ENCODE measurements at regions of chr10 and their contacts with region 1.

Region 1: DNA sequence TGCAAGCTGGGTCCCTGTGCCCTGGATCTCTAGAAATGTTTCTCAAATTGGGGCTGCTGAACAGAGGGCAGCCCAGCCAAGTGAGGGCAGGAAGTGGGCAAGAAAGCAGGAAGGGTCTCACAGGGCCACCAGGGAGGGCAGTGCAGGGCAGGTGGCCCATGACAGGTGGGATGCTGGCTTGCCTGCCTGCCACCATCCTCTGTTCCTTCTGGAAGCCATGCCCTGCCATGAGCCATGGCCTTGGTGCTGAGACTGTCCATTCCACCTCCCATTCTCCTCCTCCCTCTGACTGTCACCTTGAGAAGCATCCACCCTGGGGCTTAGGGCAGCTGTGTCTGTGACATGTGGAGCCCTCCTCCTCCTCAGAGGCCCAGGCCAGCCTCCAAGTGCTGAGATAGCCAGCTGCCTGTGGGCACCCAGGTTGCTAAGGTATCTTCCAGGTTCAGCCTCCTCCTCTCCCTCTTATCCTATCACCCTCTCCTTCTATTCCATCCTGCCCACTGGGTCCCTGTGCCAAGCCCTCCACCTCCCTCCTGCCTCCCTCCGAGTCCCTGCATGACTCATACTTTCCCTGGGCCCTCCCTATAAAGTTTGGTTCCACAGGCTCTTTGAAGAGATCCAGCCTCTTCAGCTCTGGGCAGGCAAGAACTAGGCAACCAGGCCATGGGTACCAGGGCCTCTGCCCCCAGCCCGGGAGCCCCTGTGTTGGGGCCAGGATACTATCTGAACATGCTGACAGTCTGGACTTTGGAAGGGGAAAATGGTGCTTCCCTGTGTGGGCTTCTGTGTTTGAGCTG is 1.3 kb downstream of the VSIR start:
- DNase-seq: peak in 1 of 5 donors; percentile 82
- H3K4me3 ChIP-seq: peak overlapping the region; percentile 84 to 95
- H3K4me3 Mint-ChIP-seq: peak overlapping the region; percentile 95 to 97 (median 95)
- H3K27ac ChIP-seq: peak overlapping the region; percentile 93
- H3K27ac Mint-ChIP-seq: peak overlapping the region; percentile 92 to 99 (median 95)
- H3K4me1 ChIP-seq: peaks cover 84% of the 10 kb centered on the region
- H3K4me1 Mint-ChIP-seq: peaks cover 55 to 91% (median 69%) of the 10 kb centered on the region in 4 donors
- H3K27me3 ChIP-seq: no peaks in the 10 kb centered on the region
- H3K27me3 Mint-ChIP-seq: no peaks in the 10 kb centered on the region

Region 2: DNA sequence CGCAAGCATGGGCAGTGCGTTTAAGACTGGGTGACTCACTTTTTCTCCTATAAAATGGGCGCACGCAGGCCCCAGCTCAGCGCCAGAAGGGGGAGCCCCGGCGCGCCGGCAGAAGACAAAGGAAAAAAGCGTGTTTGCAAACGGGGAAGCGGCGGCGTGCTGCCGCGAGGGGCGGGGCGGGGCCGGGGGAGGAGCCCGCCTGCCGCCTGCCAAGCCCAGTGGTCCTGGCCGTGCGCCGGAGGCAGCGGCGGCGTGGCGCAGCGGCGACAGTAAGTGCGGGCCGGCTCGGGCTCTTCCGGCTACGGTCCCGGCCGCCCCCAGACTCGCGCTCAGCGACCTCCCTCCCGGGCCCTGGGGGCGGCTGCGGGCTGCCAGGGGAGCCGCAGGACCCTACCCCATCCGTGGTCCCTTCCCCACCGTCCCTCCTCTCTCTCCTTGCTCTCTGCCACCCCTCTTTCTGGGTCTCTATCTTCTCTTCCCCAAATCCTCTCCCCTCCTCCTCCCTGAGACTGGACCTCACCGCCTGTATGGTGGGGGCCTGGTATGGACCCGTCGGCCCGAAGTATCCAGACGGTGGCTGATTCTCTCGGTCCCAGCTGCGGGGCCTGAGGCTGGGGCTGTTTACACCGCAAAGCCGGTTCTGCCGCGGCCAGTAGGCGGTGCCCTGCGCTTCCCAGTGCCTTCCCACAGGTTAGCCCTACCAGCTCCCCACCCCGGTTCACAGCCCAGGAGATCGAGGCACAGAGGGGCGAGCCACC is 452.8 kb before region 1 on chr10 and contains the start of gene SLC29A3:
- CTCF ChIA-PET with region 1: interaction called, 8 read pairs
- POLR2A ChIA-PET with region 1: interaction called, 8 read pairs
- intact Hi-C with region 1: loop called (anchors 1 kb)
- DNase-seq: peak; percentile 78 to 87 (median 80)
- H3K4me3 ChIP-seq: peak within 1 kb of the TSS; percentile 69 to 80
- H3K4me3 Mint-ChIP-seq: peak within 1 kb of the TSS; percentile 87 to 97 (median 92)
- H3K27ac ChIP-seq: peak within 1 kb of the TSS; percentile 54
- H3K27ac Mint-ChIP-seq: peak within 1 kb of the TSS; percentile 78 to 93 (median 89)
- H3K4me1 ChIP-seq: peaks cover 19% of the 10 kb centered on the region
- H3K4me1 Mint-ChIP-seq: peaks cover 16 to 51% (median 27%) of the 10 kb centered on the region in 4 donors
- H3K27me3 ChIP-seq: no peaks in the 10 kb centered on the region
- H3K27me3 Mint-ChIP-seq: no peaks in the 10 kb centered on the region
- total RNA-seq, gene SLC29A3: 7.0 to 9.1 TPM

Region 3: GRCh38 chr10:71486484-71487114 is 285.4 kb before region 1 on chr10:
- CTCF ChIA-PET with region 1: no interaction called
- POLR2A ChIA-PET with region 1: no interaction called
- intact Hi-C with region 1: no loop called
- DNase-seq: peak in 3 of 5 donors; percentile 7 to 44 (median 8)
- H3K4me3 ChIP-seq: no peak overlapping the region
- H3K4me3 Mint-ChIP-seq: no peak overlapping the region
- H3K27ac ChIP-seq: no peak overlapping the region
- H3K27ac Mint-ChIP-seq: no peak overlapping the region
- H3K4me1 ChIP-seq: no peaks in the 10 kb centered on the region
- H3K4me1 Mint-ChIP-seq: no peaks in the 10 kb centered on the region
- H3K27me3 ChIP-seq: no peaks in the 10 kb centered on the region
- H3K27me3 Mint-ChIP-seq: peaks cover 7 to 9% of the 10 kb centered on the region in 2 donors

Region 4: GRCh38 chr10:71696628-71697326 is 75.2 kb before region 1 on chr10:
- CTCF ChIA-PET with region 1: interaction called, 379 read pairs
- POLR2A ChIA-PET with region 1: interaction called, 83 read pairs
- intact Hi-C with region 1: loop called (anchors 1 kb)
- DNase-seq: peak; percentile 54 to 60 (median 56)
- H3K4me3 ChIP-seq: no peak overlapping the region
- H3K4me3 Mint-ChIP-seq: peak overlapping the region in 1 of 8 donors; percentile 10
- H3K27ac ChIP-seq: no peak overlapping the region
- H3K27ac Mint-ChIP-seq: peak overlapping the region in 3 of 7 donors; percentile 24 to 57 (median 46)
- H3K4me1 ChIP-seq: peaks cover 51% of the 10 kb centered on the region
- H3K4me1 Mint-ChIP-seq: peaks cover 23 to 60% (median 35%) of the 10 kb centered on the region in 4 donors
- H3K27me3 ChIP-seq: no peaks in the 10 kb centered on the region
- H3K27me3 Mint-ChIP-seq: no peaks in the 10 kb centered on the region

Region 5: DNA sequence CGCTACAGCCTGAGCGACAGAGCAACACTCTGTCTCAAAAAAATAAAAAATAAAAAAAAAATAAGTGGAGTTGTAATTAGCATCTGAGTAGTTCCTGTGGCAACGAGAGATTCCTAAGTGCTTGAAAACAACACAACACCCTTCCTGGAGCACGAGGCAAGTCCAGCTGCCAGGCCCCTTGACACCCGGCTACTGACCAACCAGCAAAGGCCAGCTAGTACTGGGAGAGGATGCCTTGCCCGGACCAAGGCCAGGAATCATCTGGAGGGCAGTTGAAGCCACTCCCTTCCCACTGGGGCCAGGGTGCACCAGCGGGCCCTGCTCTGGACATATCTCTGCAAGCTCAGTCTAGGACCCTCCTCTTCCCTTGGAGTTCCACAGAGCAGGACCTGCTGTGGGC is 53.0 kb before region 1 on chr10:
- CTCF ChIA-PET with region 1: interaction called, 174 read pairs
- POLR2A ChIA-PET with region 1: interaction called, 444 read pairs
- intact Hi-C with region 1: no loop called
- DNase-seq: no peak
- H3K4me3 ChIP-seq: no peak overlapping the region
- H3K4me3 Mint-ChIP-seq: no peak overlapping the region
- H3K27ac ChIP-seq: no peak overlapping the region
- H3K27ac Mint-ChIP-seq: peak overlapping the region in 2 of 7 donors; percentile 41 to 79
- H3K4me1 ChIP-seq: peaks cover 74% of the 10 kb centered on the region
- H3K4me1 Mint-ChIP-seq: peaks cover 27 to 79% (median 47%) of the 10 kb centered on the region in 4 donors
- H3K27me3 ChIP-seq: no peaks in the 10 kb centered on the region
- H3K27me3 Mint-ChIP-seq: no peaks in the 10 kb centered on the region

Region 6: DNA sequence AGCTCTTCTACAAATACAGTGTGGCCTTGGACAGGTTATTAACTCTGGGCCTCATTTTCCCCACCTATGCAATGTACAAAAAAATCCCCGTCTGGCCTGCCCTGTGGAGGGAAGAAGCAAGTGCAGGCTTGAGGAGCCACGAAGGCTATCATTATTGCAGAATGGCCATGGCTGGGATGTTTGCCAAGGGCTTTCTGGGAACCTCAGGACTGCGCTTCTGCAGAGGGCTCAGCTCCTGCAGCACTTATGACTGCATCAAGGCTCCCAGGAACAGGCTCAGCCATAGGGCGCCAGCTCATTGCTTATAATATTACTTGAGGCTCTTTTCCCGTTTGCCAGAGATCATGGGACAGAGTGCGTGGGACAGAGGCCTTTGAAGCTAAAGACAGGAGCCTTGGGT is 31.9 kb before region 1 on chr10:
- CTCF ChIA-PET with region 1: interaction called, 174 read pairs
- POLR2A ChIA-PET with region 1: interaction called, 1,035 read pairs
- intact Hi-C with region 1: no loop called
- DNase-seq: no peak
- H3K4me3 ChIP-seq: no peak overlapping the region
- H3K4me3 Mint-ChIP-seq: peak overlapping the region in 7 of 8 donors; percentile 26 to 74 (median 59)
- H3K27ac ChIP-seq: peak overlapping the region; percentile 11
- H3K27ac Mint-ChIP-seq: peak overlapping the region; percentile 58 to 97 (median 89)
- H3K4me1 ChIP-seq: peaks cover 100% of the 10 kb centered on the region
- H3K4me1 Mint-ChIP-seq: peaks cover 76 to 100% (median 93%) of the 10 kb centered on the region in 4 donors
- H3K27me3 ChIP-seq: no peaks in the 10 kb centered on the region
- H3K27me3 Mint-ChIP-seq: no peaks in the 10 kb centered on the region

Region 7: GRCh38 chr10:71756311-71757191 is 15.5 kb before region 1 on chr10:
- CTCF ChIA-PET with region 1: interaction called, 109 read pairs
- POLR2A ChIA-PET with region 1: interaction called, 1,035 read pairs
- intact Hi-C with region 1: loop called (anchors 1 kb)
- DNase-seq: peak; percentile 5 to 76 (median 73)
- H3K4me3 ChIP-seq: peak overlapping the region in 1 of 2 donors; percentile 35
- H3K4me3 Mint-ChIP-seq: peak overlapping the region; percentile 54 to 87 (median 76)
- H3K27ac ChIP-seq: peak overlapping the region; percentile 53
- H3K27ac Mint-ChIP-seq: peak overlapping the region; percentile 95 to 99 (median 96)
- H3K4me1 ChIP-seq: peaks cover 94% of the 10 kb centered on the region
- H3K4me1 Mint-ChIP-seq: peaks cover 68 to 100% (median 83%) of the 10 kb centered on the region in 4 donors
- H3K27me3 ChIP-seq: no peaks in the 10 kb centered on the region
- H3K27me3 Mint-ChIP-seq: no peaks in the 10 kb centered on the region

Region 8: DNA sequence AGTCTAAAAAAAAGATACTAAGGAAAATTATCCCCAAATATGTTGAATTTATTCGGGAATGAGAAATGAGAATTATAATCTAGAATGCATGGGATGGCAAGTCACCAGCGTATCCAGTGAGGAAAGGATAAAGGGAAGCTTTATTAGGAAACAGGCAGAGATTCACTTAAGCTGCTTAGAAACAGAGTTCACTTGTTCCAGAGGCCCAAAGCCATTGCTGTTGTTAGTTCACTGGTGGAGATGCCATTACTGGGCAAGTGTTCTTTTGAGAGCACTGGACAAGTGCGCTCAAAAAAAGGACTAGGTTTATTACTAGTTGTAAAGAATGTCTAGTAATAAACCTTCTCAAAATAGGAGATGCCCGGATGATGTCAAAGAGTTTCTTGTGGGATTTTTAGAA is 802.6 kb after region 1 on chr10:
- CTCF ChIA-PET with region 1: no interaction called
- POLR2A ChIA-PET with region 1: no interaction called
- intact Hi-C with region 1: no loop called
- DNase-seq: no peak
- H3K4me3 ChIP-seq: no peak overlapping the region
- H3K4me3 Mint-ChIP-seq: no peak overlapping the region
- H3K27ac ChIP-seq: no peak overlapping the region
- H3K27ac Mint-ChIP-seq: no peak overlapping the region
- H3K4me1 ChIP-seq: no peaks in the 10 kb centered on the region
- H3K4me1 Mint-ChIP-seq: peaks cover 0 to 9% (median 5%) of the 10 kb centered on the region in 4 donors
- H3K27me3 ChIP-seq: no peaks in the 10 kb centered on the region
- H3K27me3 Mint-ChIP-seq: no peaks in the 10 kb centered on the region